A549 (cell line): ENCODE measurements at regions of chr18 and their contacts with region 1.

Region 1: GRCh38 chr18:3623769-3624545 is 174.0 kb downstream of the TGIF1 start:
- DNase-seq: peak; percentile 69 to 99
- ATAC-seq: peak; percentile 86 to 87
- H3K4me3 ChIP-seq: peak overlapping the region; percentile 32; the same call in 2 of the 3 replicates
- H3K27ac ChIP-seq: peak overlapping the region; percentile 99 to 100
- H3K4me1 ChIP-seq: peaks cover 60% of the 10 kb centered on the region
- CTCF ChIP-seq: no peak
- EP300 ChIP-seq: peak; percentile 95 to 99
- POLR2A ChIP-seq: peak; percentile 42; the same call in 1 of the 2 replicates
- RAD21 ChIP-seq: peak; percentile 20 to 38; a peak in 4 of 5 replicates

Region 2: DNA sequence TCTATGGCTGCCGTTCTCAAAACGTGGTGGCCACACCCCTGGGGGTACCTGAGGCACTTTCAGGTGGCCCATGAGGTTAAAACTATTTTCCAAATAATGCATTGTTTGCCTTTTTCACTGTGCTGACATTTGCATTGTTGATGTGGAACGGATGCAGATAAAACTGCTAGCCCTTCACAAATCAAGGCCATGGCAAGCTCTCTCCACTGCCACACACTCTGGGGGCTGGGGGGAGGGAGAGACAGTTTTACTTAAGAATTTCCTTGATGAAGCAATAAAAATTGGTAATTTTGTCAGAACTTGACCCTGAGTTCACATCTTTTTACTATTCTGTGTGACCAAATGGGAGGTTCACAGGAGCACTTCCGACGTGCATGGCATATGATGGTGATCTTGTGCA is 196.0 kb before region 1 on chr18:
- CTCF ChIA-PET with region 1: no interaction called
- POLR2A ChIA-PET with region 1: no interaction called
- DNase-seq: no peak
- ATAC-seq: no peak
- H3K4me3 ChIP-seq: no peak overlapping the region
- H3K27ac ChIP-seq: no peak overlapping the region
- H3K4me1 ChIP-seq: peaks cover 8% of the 10 kb centered on the region; the same call in 1 of the 3 replicates
- CTCF ChIP-seq: no peak
- EP300 ChIP-seq: no peak
- POLR2A ChIP-seq: no peak
- RAD21 ChIP-seq: no peak

Region 3: GRCh38 chr18:3652380-3653262 is 28.7 kb after region 1 on chr18:
- CTCF ChIA-PET with region 1: interaction called, 12 read pairs
- POLR2A ChIA-PET with region 1: interaction called, 77 read pairs
- DNase-seq: peak; percentile 89 to 99
- ATAC-seq: peak; percentile 86 to 88
- H3K4me3 ChIP-seq: peak overlapping the region; percentile 51
- H3K27ac ChIP-seq: peak overlapping the region; percentile 99 to 100
- H3K4me1 ChIP-seq: peaks cover 63% of the 10 kb centered on the region
- CTCF ChIP-seq: no peak
- EP300 ChIP-seq: peak; percentile 60 to 88; a peak in 3 of 5 replicates
- POLR2A ChIP-seq: peak; percentile 29; the same call in 1 of the 2 replicates
- RAD21 ChIP-seq: peak in 1 of 2 experiments; percentile 5; a peak in 1 of 5 replicates